Activated CD4-positive, alpha-beta T cell treated with anti-CD3 and anti-CD28 coated beads, Interleukin-2, amount 10 ng/mL, durations not matched to agents 24 days and 14 days (primary cell): ENCODE measurements at regions of chr1 and their contacts with region 1.

Region 1: GRCh38 chr1:89762779-89763648 is 57.8 kb upstream of the LRRC8D start:
- DNase-seq: peak; percentile 96
- H3K4me3 Mint-ChIP-seq: peak overlapping the region; percentile 91
- H3K27ac Mint-ChIP-seq: peak overlapping the region; percentile 96
- H3K4me1 Mint-ChIP-seq: peaks cover 53% of the 10 kb centered on the region
- H3K27me3 Mint-ChIP-seq: no peaks in the 10 kb centered on the region

Region 2: GRCh38 chr1:89605692-89606091 is 157.3 kb before region 1 on chr1:
- intact Hi-C with region 1: loop called (anchors 2 kb)
- DNase-seq: no peak
- H3K4me3 Mint-ChIP-seq: peak overlapping the region; percentile 64
- H3K27ac Mint-ChIP-seq: peak overlapping the region; percentile 99
- H3K4me1 Mint-ChIP-seq: peaks cover 86% of the 10 kb centered on the region
- H3K27me3 Mint-ChIP-seq: no peaks in the 10 kb centered on the region

Region 3: DNA sequence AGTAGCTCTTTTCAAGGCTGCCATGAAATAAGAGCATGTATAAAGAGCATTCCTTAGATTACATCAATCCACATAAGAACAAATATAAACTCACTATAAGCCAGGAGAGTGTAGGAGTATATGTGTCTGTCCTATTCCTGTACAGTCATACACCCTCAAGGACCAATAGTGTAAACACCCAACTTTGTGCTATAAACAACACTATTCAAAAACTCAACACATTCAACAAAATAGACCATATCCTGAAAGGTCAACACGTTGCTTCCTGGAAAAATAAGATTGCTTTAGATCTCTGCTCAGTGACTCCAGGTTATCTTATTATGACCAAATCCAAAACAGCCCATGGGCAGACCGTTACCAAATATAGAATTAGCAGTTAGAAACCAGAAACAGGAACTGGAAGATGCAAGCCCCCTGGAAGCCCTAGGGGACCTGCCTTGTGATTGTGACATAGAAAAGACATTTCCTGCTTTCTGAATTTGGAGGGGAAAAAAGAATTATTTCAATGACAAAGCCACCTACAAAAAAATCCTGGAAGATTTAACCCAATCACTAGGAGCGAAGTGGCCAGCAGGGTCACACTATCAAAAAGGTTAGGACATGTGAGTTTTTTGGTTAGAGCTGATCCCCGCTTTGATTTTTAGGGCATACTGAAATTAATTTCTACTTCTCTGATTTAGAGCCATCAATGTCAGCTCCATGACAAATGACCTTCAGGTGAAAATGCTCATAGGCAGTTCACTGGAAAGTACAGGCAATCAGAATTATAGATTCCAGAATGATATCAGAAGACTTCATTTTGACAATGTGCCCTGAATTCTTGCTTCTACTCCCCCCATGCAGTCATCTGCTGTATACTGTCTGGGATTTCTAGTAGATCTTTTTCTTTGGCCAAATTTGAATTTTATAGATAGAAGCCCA is 70.2 kb before region 1 on chr1:
- intact Hi-C with region 1: loop called (anchors 2 kb)
- DNase-seq: no peak
- H3K4me3 Mint-ChIP-seq: peak overlapping the region; percentile 51
- H3K27ac Mint-ChIP-seq: peak overlapping the region; percentile 85
- H3K4me1 Mint-ChIP-seq: peaks cover 64% of the 10 kb centered on the region
- H3K27me3 Mint-ChIP-seq: no peaks in the 10 kb centered on the region

Region 4: GRCh38 chr1:90550626-90551406 is 787.8 kb after region 1 on chr1:
- intact Hi-C with region 1: no loop called
- DNase-seq: no peak
- H3K4me3 Mint-ChIP-seq: no peak overlapping the region
- H3K27ac Mint-ChIP-seq: no peak overlapping the region
- H3K4me1 Mint-ChIP-seq: no peaks in the 10 kb centered on the region
- H3K27me3 Mint-ChIP-seq: peaks cover 7% of the 10 kb centered on the region